Activated CD4-positive, alpha-beta T cell treated with anti-CD3 and anti-CD28 coated beads for 36 hours (primary cell): ENCODE measurements at regions of chrX and their contacts with region 1.

Region 1: DNA sequence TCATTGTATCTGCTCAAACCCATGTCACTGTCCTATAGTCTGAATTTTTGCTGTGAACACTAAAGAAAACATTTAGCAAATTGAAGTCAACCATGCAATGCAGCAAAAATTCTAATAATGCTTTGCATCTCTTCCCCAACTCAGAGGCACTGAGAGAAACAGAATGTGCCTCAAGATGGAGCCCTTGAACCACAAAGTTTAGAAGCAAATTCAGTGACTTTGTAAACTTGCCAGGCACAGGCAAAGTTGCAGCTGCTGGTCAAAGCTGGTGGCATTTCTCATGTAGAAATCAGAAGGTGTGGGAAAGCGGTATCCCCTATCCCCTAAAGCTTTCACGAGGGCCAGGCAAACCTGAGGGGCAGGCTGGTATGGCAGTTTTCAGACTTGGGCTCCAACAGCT is 121.7 kb upstream of the DIPK2B start:
- DNase-seq: peak; percentile 20
- ATAC-seq: no peak
- H3K4me3 Mint-ChIP-seq: no peak overlapping the region
- H3K27ac Mint-ChIP-seq: no peak overlapping the region
- H3K4me1 Mint-ChIP-seq: peaks cover 7% of the 10 kb centered on the region
- H3K27me3 Mint-ChIP-seq: peaks cover 4% of the 10 kb centered on the region

Region 2: DNA sequence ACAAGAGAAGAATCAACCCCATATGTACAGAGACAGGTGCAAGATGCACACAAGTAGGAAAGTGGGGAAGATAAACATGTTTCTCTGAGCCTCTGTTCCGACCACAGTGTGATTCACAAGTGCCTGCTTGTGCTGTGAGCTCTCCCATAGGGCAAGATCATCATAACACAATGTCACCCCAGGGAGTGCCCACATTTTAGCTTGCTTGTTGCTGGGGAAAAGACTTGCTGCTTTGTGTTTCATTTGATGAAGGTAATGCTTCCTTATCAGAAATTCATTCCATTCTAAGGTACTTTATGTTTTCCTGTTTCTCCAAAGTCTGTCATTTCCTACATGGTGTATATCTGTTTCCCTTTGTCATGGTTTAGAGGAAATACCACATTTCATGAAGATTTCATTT is 182.8 kb after region 1 on chrX:
- CTCF ChIA-PET with region 1: no interaction called
- POLR2A ChIA-PET with region 1: no interaction called
- intact Hi-C with region 1: loop called in 1 of 2 experiments (anchors 5 kb)
- DNase-seq: peak; percentile 38
- ATAC-seq: peak; percentile 88
- H3K4me3 Mint-ChIP-seq: no peak overlapping the region
- H3K27ac Mint-ChIP-seq: no peak overlapping the region
- H3K4me1 Mint-ChIP-seq: peaks cover 14% of the 10 kb centered on the region
- H3K27me3 Mint-ChIP-seq: peaks cover 4% of the 10 kb centered on the region

Region 3: DNA sequence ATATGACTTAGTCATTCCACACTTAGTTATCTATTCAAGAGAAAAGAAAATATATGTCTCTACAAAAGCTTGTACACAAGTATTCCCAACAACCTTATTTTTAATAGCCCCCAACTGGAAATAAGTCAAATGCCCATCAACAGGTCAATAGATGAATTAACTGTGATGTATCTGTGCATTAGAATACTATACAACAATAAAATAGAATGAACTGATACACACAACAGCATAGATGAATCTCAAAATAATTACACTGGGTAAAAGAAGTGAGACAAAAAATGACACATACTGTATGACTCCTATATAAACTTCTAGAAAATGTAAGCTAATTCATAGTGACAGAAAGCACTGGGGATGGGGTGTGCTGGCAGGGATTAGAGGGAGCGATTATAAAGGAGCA is 232.4 kb after region 1 on chrX:
- CTCF ChIA-PET with region 1: no interaction called
- POLR2A ChIA-PET with region 1: no interaction called
- intact Hi-C with region 1: loop called in 1 of 2 experiments (anchors 5 kb)
- DNase-seq: no peak
- ATAC-seq: no peak
- H3K4me3 Mint-ChIP-seq: no peak overlapping the region
- H3K27ac Mint-ChIP-seq: no peak overlapping the region
- H3K4me1 Mint-ChIP-seq: no peaks in the 10 kb centered on the region
- H3K27me3 Mint-ChIP-seq: no peaks in the 10 kb centered on the region

Region 4: GRCh38 chrX:45743081-45743533 is 420.7 kb after region 1 on chrX:
- CTCF ChIA-PET with region 1: no interaction called
- POLR2A ChIA-PET with region 1: no interaction called
- intact Hi-C with region 1: loop called in 1 of 2 experiments (anchors 10 kb)
- DNase-seq: peak; percentile 34
- ATAC-seq: peak; percentile 76
- H3K4me3 Mint-ChIP-seq: no peak overlapping the region
- H3K27ac Mint-ChIP-seq: no peak overlapping the region
- H3K4me1 Mint-ChIP-seq: peaks cover 16% of the 10 kb centered on the region
- H3K27me3 Mint-ChIP-seq: no peaks in the 10 kb centered on the region

Region 5: GRCh38 chrX:46376246-46376885 is 1054.0 kb after region 1 on chrX:
- CTCF ChIA-PET with region 1: interaction called, 3 read pairs
- POLR2A ChIA-PET with region 1: no interaction called
- intact Hi-C with region 1: loop called (anchors 2 to 5 kb)
- DNase-seq: peak; percentile 52
- ATAC-seq: peak; percentile 97
- H3K4me3 Mint-ChIP-seq: no peak overlapping the region
- H3K27ac Mint-ChIP-seq: no peak overlapping the region
- H3K4me1 Mint-ChIP-seq: peaks cover 18% of the 10 kb centered on the region
- H3K27me3 Mint-ChIP-seq: no peaks in the 10 kb centered on the region

Region 6: GRCh38 chrX:46408553-46409407 is 1086.4 kb after region 1 on chrX:
- CTCF ChIA-PET with region 1: interaction called, 9 read pairs
- POLR2A ChIA-PET with region 1: no interaction called
- intact Hi-C with region 1: loop called in 1 of 2 experiments (anchors 5 kb)
- DNase-seq: peak; percentile 81
- ATAC-seq: no peak
- H3K4me3 Mint-ChIP-seq: no peak overlapping the region
- H3K27ac Mint-ChIP-seq: no peak overlapping the region
- H3K4me1 Mint-ChIP-seq: peaks cover 4% of the 10 kb centered on the region
- H3K27me3 Mint-ChIP-seq: no peaks in the 10 kb centered on the region

Region 7: GRCh38 chrX:46461653-46462191 is 1139.3 kb after region 1 on chrX:
- CTCF ChIA-PET with region 1: no interaction called
- POLR2A ChIA-PET with region 1: no interaction called
- intact Hi-C with region 1: no loop called
- DNase-seq: no peak
- ATAC-seq: peak; percentile 23
- H3K4me3 Mint-ChIP-seq: no peak overlapping the region
- H3K27ac Mint-ChIP-seq: peak overlapping the region; percentile 33
- H3K4me1 Mint-ChIP-seq: peaks cover 14% of the 10 kb centered on the region
- H3K27me3 Mint-ChIP-seq: no peaks in the 10 kb centered on the region

Region 8: GRCh38 chrX:46777971-46778810 is 1455.8 kb after region 1 on chrX:
- CTCF ChIA-PET with region 1: no interaction called
- POLR2A ChIA-PET with region 1: interaction called, 16 read pairs
- intact Hi-C with region 1: no loop called
- DNase-seq: no peak
- ATAC-seq: no peak
- H3K4me3 Mint-ChIP-seq: no peak overlapping the region
- H3K27ac Mint-ChIP-seq: peak overlapping the region; percentile 47
- H3K4me1 Mint-ChIP-seq: peaks cover 17% of the 10 kb centered on the region
- H3K27me3 Mint-ChIP-seq: peaks cover 3% of the 10 kb centered on the region